HEK293T (cell line): ENCODE measurements at regions of chr12 and their contacts with region 1.

Region 1: GRCh38 chr12:52082988-52083637 is 3.6 kb downstream of the SMIM41 start:
- DNase-seq: peak; percentile 87

Region 2: DNA sequence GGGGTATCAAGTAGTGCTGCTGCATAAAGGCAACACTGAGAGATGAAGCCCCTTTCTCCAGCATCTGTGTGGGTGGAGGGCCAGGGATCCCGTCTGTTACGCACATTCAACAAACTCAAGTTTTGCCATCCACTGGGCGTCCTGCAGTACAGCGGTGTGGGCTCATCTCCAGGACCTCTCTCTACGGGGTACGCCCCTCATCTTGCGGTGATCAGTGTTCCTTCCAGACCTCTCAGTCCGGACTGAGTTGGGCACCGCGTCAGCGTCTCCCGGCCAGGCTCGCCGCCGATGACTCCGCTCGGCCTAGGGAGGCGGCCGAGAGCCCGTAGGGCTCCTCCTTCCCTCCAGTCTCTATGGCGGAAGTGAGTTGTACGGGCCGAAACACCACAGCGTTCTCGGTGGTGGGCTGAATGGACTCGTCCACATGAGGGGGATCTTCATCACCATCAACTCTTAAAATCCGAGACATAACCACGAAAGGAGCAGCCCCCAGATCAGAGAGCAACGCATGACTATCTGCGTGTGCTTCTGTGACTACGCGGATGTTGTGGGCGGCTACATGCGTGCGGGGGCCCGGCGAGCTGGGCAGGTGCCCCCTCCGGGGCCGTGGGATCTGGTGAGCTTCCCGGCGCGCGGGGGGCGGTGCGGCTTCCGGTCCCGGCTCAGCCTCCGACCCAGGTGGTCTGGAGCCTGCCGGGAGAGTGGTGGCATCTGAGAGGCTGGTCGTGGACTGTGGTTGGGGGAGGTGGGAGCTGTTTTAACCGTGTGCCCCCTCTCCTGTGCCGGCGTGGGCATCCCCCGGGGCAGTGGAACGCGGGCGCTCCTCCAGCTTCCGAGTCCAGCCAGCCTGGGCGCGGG is 13.6 kb before region 1 on chr12 and contains the start of gene ATG101:
- CTCF ChIA-PET with region 1: interaction called, 3 read pairs
- POLR2A ChIA-PET with region 1: interaction called, 10 read pairs
- DNase-seq: peak; percentile 94

Region 3: DNA sequence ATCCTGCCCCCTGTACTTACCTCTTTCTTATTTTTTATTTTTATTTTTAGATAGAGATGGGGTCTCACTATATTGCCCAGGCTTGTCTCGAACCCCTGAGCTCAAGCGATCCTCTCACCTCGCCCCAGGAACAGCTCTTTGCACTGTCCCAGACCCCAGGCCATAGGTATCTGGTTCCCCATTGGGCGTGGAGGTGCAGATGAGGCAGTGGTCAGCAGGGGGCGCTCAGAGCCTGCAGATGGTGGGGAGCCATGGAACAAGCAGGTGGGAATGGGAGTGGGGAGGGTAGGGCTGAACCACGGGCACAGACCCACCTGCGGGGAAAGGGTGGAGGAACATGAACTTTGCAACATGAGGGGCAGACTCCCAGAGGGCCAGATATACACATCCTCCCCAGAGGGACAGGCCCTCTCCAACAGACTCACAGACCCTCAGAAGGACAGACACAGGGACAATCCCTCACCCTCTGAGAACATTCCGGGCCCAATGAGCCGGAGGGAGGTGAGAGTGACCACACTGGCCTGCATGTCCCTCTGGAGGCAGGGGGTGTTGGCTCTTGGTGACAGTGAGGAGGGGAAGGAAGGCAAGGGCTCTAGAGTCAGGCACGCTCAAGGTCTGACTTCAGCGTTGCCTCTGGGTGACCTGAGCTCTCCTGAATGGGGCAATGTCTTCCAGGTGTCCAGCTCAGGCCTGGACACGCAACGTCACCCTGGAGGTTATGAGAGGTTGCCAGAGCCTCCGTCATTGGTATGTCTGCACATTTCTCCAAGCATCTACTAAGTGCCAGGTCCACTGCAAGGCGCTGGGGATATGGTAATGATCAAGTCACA is 73.8 kb after region 1 on chr12:
- CTCF ChIA-PET with region 1: no interaction called
- POLR2A ChIA-PET with region 1: no interaction called
- DNase-seq: peak; percentile 81